Dorsolateral prefrontal cortex (tissue), 120 donors: ENCODE measurements at regions of chr1 and their contacts with region 1.

Region 1: GRCh38 chr1:234154320-234155251 is 218.7 kb upstream of the COA6 start:
- DNase-seq: peak in 2 of 10 donors; percentile 28 to 53
- H3K4me3 ChIP-seq: no peak overlapping the region
- H3K27ac ChIP-seq: peak overlapping the region in 1 of 59 donors; percentile 6
- H3K27me3 ChIP-seq: no peaks in the 10 kb centered on the region
- CTCF ChIP-seq: peak; percentile 69 to 93 (median 86)

Region 2: DNA sequence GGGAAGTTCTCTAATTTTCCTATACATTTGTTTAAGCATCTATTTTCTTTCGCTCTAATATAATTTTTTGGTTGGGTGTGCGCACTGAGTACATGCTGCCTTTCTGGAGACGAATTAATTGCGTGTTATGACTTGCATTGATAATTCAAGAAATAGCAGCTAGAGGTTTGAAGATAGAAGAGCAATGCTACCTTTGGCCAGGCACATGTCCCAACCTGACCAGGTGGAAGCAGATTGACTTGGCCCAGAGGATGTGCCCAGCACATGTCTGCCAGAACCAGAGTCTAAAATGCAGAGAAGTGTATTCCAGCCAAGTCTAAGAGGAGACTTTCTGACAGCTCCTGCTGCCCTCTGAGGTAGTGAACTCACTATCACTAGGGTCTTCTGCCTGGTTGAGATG is 135.8 kb before region 1 on chr1:
- intact Hi-C with region 1: no loop called
- DNase-seq: no peak
- H3K4me3 ChIP-seq: no peak overlapping the region
- H3K27ac ChIP-seq: no peak overlapping the region
- H3K27me3 ChIP-seq: no peaks in the 10 kb centered on the region
- CTCF ChIP-seq: no peak

Region 3: DNA sequence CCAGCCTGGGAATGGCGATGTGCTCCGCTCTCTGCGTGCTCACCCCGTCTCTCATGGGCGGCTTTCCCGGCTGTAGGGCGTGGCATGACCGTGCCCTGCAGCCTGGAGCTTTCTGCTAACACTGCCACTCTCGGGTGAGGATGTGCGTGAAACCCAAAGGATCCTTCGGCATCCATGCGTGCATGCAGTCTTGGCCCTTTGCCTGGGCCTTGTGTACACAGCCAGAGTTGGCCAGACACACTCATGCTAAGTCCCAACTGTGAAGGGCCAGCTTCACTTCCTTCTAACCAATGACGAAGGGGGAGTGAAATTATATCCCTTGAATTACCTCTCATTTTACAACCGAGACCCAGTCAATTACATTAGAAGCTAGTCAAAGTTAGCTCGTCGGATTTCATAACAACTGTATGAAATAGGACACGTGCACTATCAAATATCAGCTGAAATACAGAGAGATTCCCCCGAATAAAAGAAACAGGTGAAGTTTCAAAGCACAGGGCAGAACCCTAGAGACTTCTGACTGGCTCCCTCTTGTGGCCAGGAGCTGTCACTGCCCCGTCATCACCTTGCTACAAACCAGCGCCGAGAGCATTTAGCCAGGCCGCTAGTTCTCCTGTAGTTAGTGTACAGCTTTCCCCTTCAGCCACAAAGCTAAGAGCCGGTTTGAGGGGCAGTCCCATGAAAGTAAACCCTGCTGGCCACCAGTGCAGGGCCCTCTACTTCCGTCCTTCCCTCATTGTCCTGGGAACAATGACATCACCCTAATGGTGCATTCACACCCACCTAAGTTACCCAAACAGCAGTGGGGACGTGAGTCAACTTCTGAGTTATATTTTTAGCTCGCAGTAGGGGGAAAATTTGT is 155.2 kb after region 1 on chr1:
- intact Hi-C with region 1: loop called in 1 of 2 experiments (anchors 10 kb)
- DNase-seq: peak in 7 of 10 donors; percentile 37 to 69 (median 59)
- H3K4me3 ChIP-seq: peak overlapping the region in 2 of 59 donors; percentile 2 to 26
- H3K27ac ChIP-seq: peak overlapping the region in 44 of 59 donors; percentile 2 to 79 (median 59)
- H3K27me3 ChIP-seq: no peaks in the 10 kb centered on the region
- CTCF ChIP-seq: peak; percentile 58 to 90 (median 83)

Region 4: DNA sequence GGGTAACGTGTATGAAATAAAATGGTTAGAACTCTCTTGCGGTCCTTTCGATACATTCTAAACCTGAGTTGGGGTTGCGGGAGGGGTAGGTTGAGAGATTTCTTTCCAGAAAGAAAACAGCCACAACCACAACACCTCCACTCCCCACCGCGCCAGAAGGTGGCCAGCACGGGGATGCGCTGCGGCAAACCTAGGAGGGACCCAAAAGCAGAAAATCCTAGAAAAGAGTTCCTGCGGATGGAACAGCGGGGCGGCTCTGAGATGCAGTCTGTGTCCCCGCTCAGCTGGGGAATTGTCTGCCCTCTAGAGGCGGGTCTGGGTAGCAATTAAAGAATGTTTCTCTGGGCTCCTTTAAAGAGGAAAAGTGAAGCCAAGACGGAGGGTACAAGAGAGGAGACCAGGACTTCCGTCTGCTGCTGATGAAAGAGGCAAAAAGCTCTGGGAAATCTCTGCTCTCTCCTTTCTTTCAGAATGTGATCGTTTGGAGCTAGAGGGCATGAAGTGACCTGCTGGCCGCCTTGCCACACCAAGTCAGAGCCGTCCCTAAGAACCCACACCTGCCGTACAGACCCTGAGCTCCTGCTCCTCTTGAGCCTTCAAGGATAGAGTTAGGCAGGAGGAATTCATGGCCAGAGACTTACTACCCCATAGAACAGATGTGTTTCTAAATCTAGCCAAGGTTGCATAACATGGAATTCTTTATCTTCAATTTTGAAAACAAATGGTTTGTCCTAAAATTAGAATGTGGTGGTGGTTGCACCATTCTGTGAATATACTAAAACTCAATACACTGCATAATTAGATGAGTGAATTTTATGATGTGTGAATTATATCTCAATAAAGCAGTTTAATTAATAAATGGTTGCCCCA is 172.1 kb after region 1 on chr1:
- intact Hi-C with region 1: loop called in 1 of 2 experiments (anchors 5 kb)
- DNase-seq: peak in 4 of 10 donors; percentile 40 to 69 (median 58)
- H3K4me3 ChIP-seq: peak overlapping the region in 43 of 59 donors; percentile 10 to 61 (median 35)
- H3K27ac ChIP-seq: peak overlapping the region in 41 of 59 donors; percentile 2 to 77 (median 46)
- H3K27me3 ChIP-seq: peaks cover 0 to 7% (median 0%) of the 10 kb centered on the region in 45 donors
- CTCF ChIP-seq: peak; percentile 27 to 84 (median 73)

Region 5: DNA sequence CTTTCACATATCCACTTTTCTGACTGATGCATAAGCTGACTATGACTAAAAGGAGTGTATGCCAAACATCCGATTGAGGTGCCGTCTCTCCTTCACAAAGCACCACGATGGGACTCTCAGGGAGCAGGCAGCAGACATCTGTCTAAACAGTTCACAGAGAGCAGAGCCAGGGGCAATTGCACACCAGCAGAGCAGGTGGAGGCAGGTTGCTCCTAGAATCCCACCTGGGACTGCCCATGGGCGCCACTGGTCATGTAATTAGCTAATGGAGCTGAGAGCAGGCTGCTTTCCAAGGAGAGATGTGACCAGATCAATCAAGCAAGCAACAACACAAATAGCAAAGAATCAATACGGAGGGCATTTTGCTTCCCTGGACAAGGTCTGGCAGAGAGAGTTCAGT is 188.2 kb after region 1 on chr1:
- intact Hi-C with region 1: no loop called
- DNase-seq: no peak
- H3K4me3 ChIP-seq: no peak overlapping the region
- H3K27ac ChIP-seq: no peak overlapping the region
- H3K27me3 ChIP-seq: no peaks in the 10 kb centered on the region
- CTCF ChIP-seq: no peak

Region 6: GRCh38 chr1:234933475-234933874 is 778.9 kb after region 1 on chr1:
- intact Hi-C with region 1: no loop called
- DNase-seq: no peak
- H3K4me3 ChIP-seq: no peak overlapping the region
- H3K27ac ChIP-seq: peak overlapping the region in 1 of 59 donors; percentile 9
- H3K27me3 ChIP-seq: no peaks in the 10 kb centered on the region
- CTCF ChIP-seq: no peak